Caco-2 (cell line): ENCODE measurements at regions of chr17 and their contacts with region 1.

Region 1: DNA sequence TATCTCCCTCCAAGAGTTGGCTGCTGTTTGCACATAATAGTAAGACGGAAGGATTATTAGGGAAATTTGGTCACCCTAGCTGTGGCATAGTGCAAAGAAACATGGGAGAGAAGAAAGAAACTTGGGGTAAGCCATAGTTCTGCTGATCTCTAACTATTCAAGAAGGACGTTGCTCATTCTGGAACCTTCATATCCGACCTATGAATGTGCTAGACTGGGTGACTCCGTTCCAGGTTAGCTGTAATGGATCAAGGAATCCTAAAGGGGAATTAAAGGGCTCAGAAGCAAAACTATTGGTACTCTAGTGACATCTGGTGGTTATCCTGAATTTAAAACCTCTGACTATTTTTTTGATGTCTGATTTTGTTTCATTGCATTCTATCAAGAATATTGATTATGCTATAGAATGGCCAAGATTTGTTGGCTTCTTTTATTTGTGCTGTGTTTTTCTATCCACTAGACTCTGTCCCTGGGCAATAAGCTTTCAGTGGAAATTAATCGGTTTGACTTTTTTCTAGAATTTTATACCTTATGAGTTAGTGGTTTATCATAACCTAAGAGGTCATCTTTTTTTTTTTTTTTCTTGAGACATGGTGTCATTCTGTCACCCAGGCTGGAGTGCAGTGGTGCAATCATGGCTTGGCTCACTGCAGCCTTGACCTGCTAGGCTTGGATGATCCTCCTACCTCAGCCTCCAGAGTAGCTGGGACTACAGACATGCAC is 19.5 kb downstream of the PCTP start:
- DNase-seq: peak in 1 of 2 experiments; percentile 38
- H3K4me3 ChIP-seq: no peak overlapping the region
- H3K4me3 Mint-ChIP-seq: no peak overlapping the region
- H3K27ac Mint-ChIP-seq: no peak overlapping the region
- H3K4me1 ChIP-seq: no peaks in the 10 kb centered on the region
- H3K4me1 Mint-ChIP-seq: no peaks in the 10 kb centered on the region
- H3K27me3 ChIP-seq: no peaks in the 10 kb centered on the region
- H3K27me3 Mint-ChIP-seq: no peaks in the 10 kb centered on the region
- CTCF ChIP-seq: peak; percentile 30 to 72

Region 2: GRCh38 chr17:55527540-55528118 is 242.7 kb before region 1 on chr17:
- CTCF ChIA-PET with region 1: interaction called, 5 read pairs
- POLR2A ChIA-PET with region 1: no interaction called
- intact Hi-C with region 1: loop called (anchors 1 kb)
- DNase-seq: peak in 1 of 2 experiments; percentile 57
- H3K4me3 ChIP-seq: no peak overlapping the region
- H3K4me3 Mint-ChIP-seq: no peak overlapping the region
- H3K27ac Mint-ChIP-seq: no peak overlapping the region
- H3K4me1 ChIP-seq: 0 out of 2 replicates have a peak, but pooled peaks cover 5% of the 10 kb centered on the region
- H3K4me1 Mint-ChIP-seq: no peaks in the 10 kb centered on the region
- H3K27me3 ChIP-seq: no peaks in the 10 kb centered on the region; the same call in 1 of the 2 replicates
- H3K27me3 Mint-ChIP-seq: peaks cover 5% of the 10 kb centered on the region
- CTCF ChIP-seq: peak; percentile 43 to 68

Region 3: GRCh38 chr17:55601874-55602364 is 168.4 kb before region 1 on chr17:
- CTCF ChIA-PET with region 1: interaction called, 5 read pairs
- POLR2A ChIA-PET with region 1: no interaction called
- intact Hi-C with region 1: loop called (anchors 1 kb)
- DNase-seq: peak in 1 of 2 experiments; percentile 51
- H3K4me3 ChIP-seq: no peak overlapping the region
- H3K4me3 Mint-ChIP-seq: no peak overlapping the region
- H3K27ac Mint-ChIP-seq: no peak overlapping the region
- H3K4me1 ChIP-seq: no peaks in the 10 kb centered on the region
- H3K4me1 Mint-ChIP-seq: no peaks in the 10 kb centered on the region
- H3K27me3 ChIP-seq: no peaks in the 10 kb centered on the region
- H3K27me3 Mint-ChIP-seq: peaks cover 4% of the 10 kb centered on the region
- CTCF ChIP-seq: peak; percentile 70 to 72

Region 4: GRCh38 chr17:55735731-55736405 is 34.4 kb before region 1 on chr17:
- CTCF ChIA-PET with region 1: interaction called, 4 read pairs
- POLR2A ChIA-PET with region 1: no interaction called
- intact Hi-C with region 1: loop called (anchors 1 kb)
- DNase-seq: peak; percentile 41 to 47
- H3K4me3 ChIP-seq: no peak overlapping the region
- H3K4me3 Mint-ChIP-seq: no peak overlapping the region
- H3K27ac Mint-ChIP-seq: no peak overlapping the region
- H3K4me1 ChIP-seq: no peaks in the 10 kb centered on the region
- H3K4me1 Mint-ChIP-seq: no peaks in the 10 kb centered on the region
- H3K27me3 ChIP-seq: no peaks in the 10 kb centered on the region
- H3K27me3 Mint-ChIP-seq: peaks cover 8% of the 10 kb centered on the region
- CTCF ChIP-seq: peak; percentile 59 to 70

Region 5: DNA sequence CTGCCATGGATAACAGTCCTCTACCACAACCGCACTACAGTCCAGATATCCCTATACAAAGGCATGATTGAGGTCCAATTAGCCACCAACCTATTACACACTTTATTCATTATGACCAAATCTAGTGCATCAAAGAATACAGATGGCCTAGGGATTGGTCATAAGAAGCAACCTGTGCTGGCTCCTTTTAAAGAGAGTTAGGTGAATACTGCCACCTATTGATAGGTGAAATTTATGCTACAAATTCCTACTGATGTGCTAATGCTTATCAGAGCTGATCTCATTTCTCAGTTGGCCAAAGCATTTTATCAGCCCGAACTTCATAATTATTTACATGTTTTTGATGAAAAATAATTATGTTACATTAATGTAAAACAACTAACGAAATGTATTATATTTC is 549.2 kb after region 1 on chr17:
- CTCF ChIA-PET with region 1: no interaction called
- POLR2A ChIA-PET with region 1: no interaction called
- intact Hi-C with region 1: loop called (anchors 1 kb)
- DNase-seq: peak in 1 of 2 experiments; percentile 68
- H3K4me3 ChIP-seq: no peak overlapping the region
- H3K4me3 Mint-ChIP-seq: no peak overlapping the region
- H3K27ac Mint-ChIP-seq: no peak overlapping the region
- H3K4me1 ChIP-seq: no peaks in the 10 kb centered on the region
- H3K4me1 Mint-ChIP-seq: no peaks in the 10 kb centered on the region
- H3K27me3 ChIP-seq: no peaks in the 10 kb centered on the region
- H3K27me3 Mint-ChIP-seq: peaks cover 7% of the 10 kb centered on the region
- CTCF ChIP-seq: peak; percentile 64 to 65